ENCODE measurements at regions of chr2 and their contacts with region 1.

Region 1: DNA sequence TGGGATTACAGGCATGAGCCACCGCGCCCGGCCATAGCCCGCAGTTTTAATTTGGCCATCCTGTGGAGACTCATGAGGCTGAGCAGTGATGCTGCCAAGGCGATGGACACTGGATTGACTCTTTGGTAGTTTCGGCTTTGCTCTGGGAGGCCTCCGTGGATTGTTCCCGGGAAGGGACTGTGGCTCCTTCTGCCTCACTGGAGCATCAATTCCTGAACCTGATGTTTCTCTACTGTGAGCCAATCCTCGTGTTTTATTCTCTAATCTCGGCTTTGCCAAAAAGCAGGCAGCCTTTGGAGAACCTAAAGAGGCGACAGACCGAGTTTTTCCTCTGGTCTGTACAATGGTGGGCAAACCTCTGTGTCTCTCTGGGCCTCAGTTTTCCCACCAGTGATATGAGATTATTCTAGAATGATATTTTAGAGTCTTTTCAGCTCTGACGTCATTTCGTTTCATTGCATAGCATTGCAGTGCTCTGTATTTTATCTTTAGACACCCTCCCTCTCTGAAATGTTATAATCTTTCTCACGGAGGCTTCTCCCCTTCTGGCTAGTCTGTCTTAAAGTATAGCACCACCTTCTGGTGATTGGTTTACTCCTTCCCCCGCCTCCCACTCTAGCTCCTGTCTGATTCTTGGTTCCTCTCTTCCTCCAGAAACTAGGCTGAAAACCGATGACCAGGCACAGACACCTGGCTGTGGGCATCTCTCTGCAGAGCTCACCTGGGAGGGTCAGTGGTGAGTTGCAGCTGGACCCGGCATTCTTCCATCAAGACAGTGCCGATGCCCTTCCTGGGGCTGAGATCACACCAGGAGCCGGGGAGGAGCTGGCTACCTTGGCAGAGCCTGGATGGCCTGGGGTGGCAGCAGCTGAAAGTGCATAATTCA is 341.3 kb downstream of the MYCN start:
- DNase-seq: peak in 1 of 6 donors; percentile 21
- ATAC-seq: peak in 3 of 4 donors; percentile 74 to 86 (median 79)
- H3K4me3 ChIP-seq: no peak overlapping the region
- H3K27ac ChIP-seq: no peak overlapping the region
- H3K4me1 ChIP-seq: no peaks in the 10 kb centered on the region
- H3K27me3 ChIP-seq: no peaks in the 10 kb centered on the region
- CTCF ChIP-seq: peak in 2 of 4 donors; percentile 25 to 27

Region 2: GRCh38 chr2:16507655-16508489 is 226.2 kb after region 1 on chr2:
- intact Hi-C with region 1: loop called in 1 of 3 experiments (anchors 10 kb)
- DNase-seq: peak; percentile 24 to 84 (median 66)
- ATAC-seq: peak; percentile 93 to 99 (median 97)
- H3K4me3 ChIP-seq: peak overlapping the region; percentile 3 to 54 (median 26)
- H3K27ac ChIP-seq: no peak overlapping the region
- H3K4me1 ChIP-seq: no peaks in the 10 kb centered on the region
- H3K27me3 ChIP-seq: peaks cover 0 to 13% (median 0%) of the 10 kb centered on the region in 4 donors
- CTCF ChIP-seq: peak; percentile 37 to 75 (median 67)

Region 3: DNA sequence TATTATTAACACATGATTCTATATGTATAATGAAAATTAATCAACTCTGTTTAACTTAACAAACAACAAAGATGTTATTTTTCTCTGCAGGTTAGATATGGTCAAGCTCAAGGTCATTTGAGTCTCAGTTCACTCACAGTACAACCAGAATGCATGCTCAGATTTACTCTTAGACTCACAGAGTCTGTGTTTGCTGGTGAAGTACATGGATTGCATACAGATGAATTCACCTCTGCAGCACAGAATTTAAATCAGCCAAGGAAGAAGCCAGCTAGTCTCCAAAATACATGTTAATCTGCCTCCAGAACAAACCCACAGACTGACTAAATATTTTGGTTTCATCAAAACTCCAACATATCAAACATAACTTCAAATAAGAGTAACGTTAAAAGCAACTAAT is 812.0 kb after region 1 on chr2:
- intact Hi-C with region 1: no loop called
- DNase-seq: no peak
- ATAC-seq: no peak
- H3K4me3 ChIP-seq: no peak overlapping the region
- H3K27ac ChIP-seq: no peak overlapping the region
- H3K4me1 ChIP-seq: no peaks in the 10 kb centered on the region
- H3K27me3 ChIP-seq: no peaks in the 10 kb centered on the region
- CTCF ChIP-seq: no peak

Measured in pancreas (tissue), 10 donors.